ENCODE measurements at regions of chr4 and their contacts with region 1.

Region 1: GRCh38 chr4:70901984-70902576 is at the start of gene MOB1B:
- DNase-seq: peak; percentile 73
- ATAC-seq: peak; percentile 96
- H3K4me3 Mint-ChIP-seq: peak within 1 kb of the TSS; percentile 98
- H3K27ac Mint-ChIP-seq: peak within 1 kb of the TSS; percentile 85
- H3K4me1 Mint-ChIP-seq: peaks cover 26% of the 10 kb centered on the region
- H3K27me3 Mint-ChIP-seq: no peaks in the 10 kb centered on the region
- CTCF ChIP-seq: no peak
- total RNA-seq, gene MOB1B: 22.2 and 23.4 TPM in 2 replicates

Region 2: GRCh38 chr4:69156913-69157312 is 1745.2 kb before region 1 on chr4:
- CTCF ChIA-PET with region 1: no interaction called
- POLR2A ChIA-PET with region 1: no interaction called
- intact Hi-C with region 1: no loop called
- DNase-seq: no peak
- ATAC-seq: no peak
- H3K4me3 Mint-ChIP-seq: no peak overlapping the region
- H3K27ac Mint-ChIP-seq: no peak overlapping the region
- H3K4me1 Mint-ChIP-seq: no peaks in the 10 kb centered on the region
- H3K27me3 Mint-ChIP-seq: no peaks in the 10 kb centered on the region
- CTCF ChIP-seq: no peak

Region 3: GRCh38 chr4:70687821-70688794 is 214.0 kb before region 1 on chr4 and contains the start of gene UTP3:
- CTCF ChIA-PET with region 1: no interaction called
- POLR2A ChIA-PET with region 1: no interaction called
- intact Hi-C with region 1: loop called (anchors 1 kb)
- DNase-seq: peak; percentile 83
- ATAC-seq: peak; percentile 88
- H3K4me3 Mint-ChIP-seq: peak within 1 kb of the TSS; percentile 99
- H3K27ac Mint-ChIP-seq: peak within 1 kb of the TSS; percentile 100
- H3K4me1 Mint-ChIP-seq: peaks cover 48% of the 10 kb centered on the region
- H3K27me3 Mint-ChIP-seq: no peaks in the 10 kb centered on the region
- CTCF ChIP-seq: peak; percentile 96
- total RNA-seq, gene UTP3: 38.5 and 40.1 TPM in 2 replicates

Region 4: GRCh38 chr4:70788733-70789132 is 113.3 kb before region 1 on chr4:
- CTCF ChIA-PET with region 1: no interaction called
- POLR2A ChIA-PET with region 1: no interaction called
- intact Hi-C with region 1: loop called (anchors 5 kb)
- DNase-seq: no peak
- ATAC-seq: no peak
- H3K4me3 Mint-ChIP-seq: no peak overlapping the region
- H3K27ac Mint-ChIP-seq: no peak overlapping the region
- H3K4me1 Mint-ChIP-seq: no peaks in the 10 kb centered on the region
- H3K27me3 Mint-ChIP-seq: no peaks in the 10 kb centered on the region
- CTCF ChIP-seq: no peak

Region 5: DNA sequence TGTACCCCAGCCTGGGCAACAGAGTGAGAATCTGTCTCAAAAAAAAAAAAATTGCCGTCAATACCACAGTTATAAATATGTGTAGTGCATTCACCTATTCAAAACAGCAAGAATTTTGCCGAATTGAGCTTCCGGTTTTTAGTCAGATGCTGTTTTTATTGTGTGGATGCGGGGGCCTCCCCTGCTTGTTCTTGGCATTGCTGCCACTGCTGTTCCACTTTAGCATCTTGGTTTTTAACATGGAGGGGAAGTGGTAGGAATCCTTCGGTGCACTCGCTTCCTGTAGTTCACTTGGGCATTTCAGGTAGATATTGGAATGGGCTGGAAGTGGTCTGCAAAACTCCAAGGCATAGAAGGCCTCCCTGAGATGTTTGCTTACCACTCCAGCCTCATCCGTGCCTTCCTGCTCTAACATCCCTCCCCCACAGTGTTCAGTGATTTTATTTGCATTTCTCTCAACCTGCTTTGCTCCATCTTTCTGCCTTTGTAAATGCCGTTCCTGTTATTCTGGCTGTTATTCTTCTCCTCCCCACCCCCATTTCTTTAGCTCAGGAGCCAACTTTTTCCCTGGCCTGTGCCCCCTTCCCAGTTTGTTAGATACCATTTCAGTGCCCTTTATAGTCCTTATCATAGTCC is 25.5 kb after region 1 on chr4:
- CTCF ChIA-PET with region 1: interaction called, 4 read pairs
- POLR2A ChIA-PET with region 1: interaction called, 6 read pairs
- intact Hi-C with region 1: loop called (anchors 1 kb)
- DNase-seq: no peak
- ATAC-seq: peak; percentile 45
- H3K4me3 Mint-ChIP-seq: peak overlapping the region; percentile 33
- H3K27ac Mint-ChIP-seq: peak overlapping the region; percentile 68
- H3K4me1 Mint-ChIP-seq: peaks cover 51% of the 10 kb centered on the region
- H3K27me3 Mint-ChIP-seq: no peaks in the 10 kb centered on the region
- CTCF ChIP-seq: no peak

Region 6: DNA sequence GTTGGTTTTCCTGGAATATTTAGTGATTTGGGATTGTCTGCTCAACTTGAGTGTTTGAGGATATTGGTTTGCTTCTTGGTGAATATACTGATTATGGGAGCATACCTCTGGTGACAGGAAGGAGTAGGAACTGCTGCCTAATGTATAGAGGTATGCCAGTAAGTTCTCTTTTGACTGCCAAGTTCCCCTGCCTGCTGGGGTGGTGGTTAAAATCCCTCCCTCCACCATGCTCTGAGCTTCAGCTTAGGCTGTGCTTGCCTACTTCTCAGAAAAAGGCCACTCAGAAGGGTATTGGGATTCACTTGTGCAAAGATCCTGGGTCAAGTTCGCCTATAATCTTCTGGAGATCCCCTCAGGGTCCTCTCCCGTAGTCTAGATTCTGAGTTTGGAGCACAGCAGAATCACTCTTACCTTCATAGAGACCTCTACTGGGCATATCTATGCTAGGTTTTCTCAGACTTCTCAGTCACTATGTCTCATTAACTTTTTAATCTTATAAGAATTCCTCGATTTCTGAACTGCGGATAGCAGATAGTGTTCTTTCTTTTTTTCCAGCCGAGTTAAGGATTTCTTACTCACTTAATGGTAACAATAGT is 46.7 kb after region 1 on chr4:
- CTCF ChIA-PET with region 1: no interaction called
- POLR2A ChIA-PET with region 1: interaction called, 14 read pairs
- intact Hi-C with region 1: loop called (anchors 2 kb)
- DNase-seq: no peak
- ATAC-seq: peak; percentile 47
- H3K4me3 Mint-ChIP-seq: peak overlapping the region; percentile 13
- H3K27ac Mint-ChIP-seq: no peak overlapping the region
- H3K4me1 Mint-ChIP-seq: peaks cover 34% of the 10 kb centered on the region
- H3K27me3 Mint-ChIP-seq: no peaks in the 10 kb centered on the region
- CTCF ChIP-seq: no peak

Region 7: GRCh38 chr4:71009890-71010588 is 108.0 kb after region 1 on chr4:
- CTCF ChIA-PET with region 1: no interaction called
- POLR2A ChIA-PET with region 1: interaction called, 4 read pairs
- intact Hi-C with region 1: loop called (anchors 1 kb)
- DNase-seq: no peak
- ATAC-seq: peak; percentile 46
- H3K4me3 Mint-ChIP-seq: peak overlapping the region; percentile 2
- H3K27ac Mint-ChIP-seq: peak overlapping the region; percentile 64
- H3K4me1 Mint-ChIP-seq: peaks cover 65% of the 10 kb centered on the region
- H3K27me3 Mint-ChIP-seq: no peaks in the 10 kb centered on the region
- CTCF ChIP-seq: peak; percentile 56

Region 8: DNA sequence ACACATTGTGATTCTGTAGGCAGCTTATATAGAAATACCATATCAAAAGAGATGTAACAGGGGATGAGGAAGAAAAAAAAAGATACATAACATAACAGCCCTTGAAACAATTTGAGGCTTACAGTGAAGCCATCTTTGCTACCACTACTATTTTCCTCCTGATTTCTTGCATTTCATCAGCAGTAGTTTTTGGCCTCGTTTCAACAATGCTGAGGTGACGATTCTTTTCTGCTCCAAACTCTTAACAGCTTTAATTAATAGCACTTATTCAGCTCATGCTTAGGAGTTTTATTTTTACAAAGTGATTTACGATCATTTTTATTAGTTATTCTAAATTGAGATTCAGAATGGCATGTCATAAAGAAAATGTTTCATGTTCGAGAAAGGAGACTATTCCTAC is 254.5 kb after region 1 on chr4:
- CTCF ChIA-PET with region 1: no interaction called
- POLR2A ChIA-PET with region 1: no interaction called
- intact Hi-C with region 1: no loop called
- DNase-seq: no peak
- ATAC-seq: no peak
- H3K4me3 Mint-ChIP-seq: no peak overlapping the region
- H3K27ac Mint-ChIP-seq: no peak overlapping the region
- H3K4me1 Mint-ChIP-seq: no peaks in the 10 kb centered on the region
- H3K27me3 Mint-ChIP-seq: peaks cover 9% of the 10 kb centered on the region
- CTCF ChIP-seq: no peak